WTC11 (cell line): ENCODE measurements at regions of chr20 and their contacts with region 1.

Region 1: DNA sequence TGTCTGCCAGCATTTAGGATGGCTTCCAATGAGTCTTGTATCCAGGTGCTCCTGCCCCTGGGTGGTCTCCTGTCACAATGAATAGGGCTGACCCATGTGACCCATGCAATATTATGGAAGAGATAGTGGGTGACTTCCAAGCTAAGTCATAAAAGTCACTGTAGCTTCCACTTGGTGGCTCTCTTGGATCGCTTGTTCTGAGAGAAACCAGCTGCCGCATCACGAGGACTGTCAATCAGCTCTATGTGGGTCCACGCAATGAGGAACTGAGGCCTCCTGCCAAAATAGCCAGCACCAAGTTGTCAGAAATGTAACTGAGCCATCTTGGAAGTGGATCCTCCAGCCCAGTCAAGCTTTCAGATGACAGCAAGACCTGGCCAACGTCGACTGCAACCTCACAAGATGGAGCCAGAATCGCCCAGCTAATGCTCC is 14.9 kb upstream of the MATN4 start:
- DNase-seq: no peak
- ATAC-seq: peak; percentile 49
- H3K4me3 Mint-ChIP-seq: no peak overlapping the region
- H3K27ac Mint-ChIP-seq: no peak overlapping the region
- H3K4me1 Mint-ChIP-seq: peaks cover 2% of the 10 kb centered on the region; the same call in 1 of the 2 replicates
- H3K27me3 Mint-ChIP-seq: no peaks in the 10 kb centered on the region
- CTCF ChIP-seq: no peak

Region 2: DNA sequence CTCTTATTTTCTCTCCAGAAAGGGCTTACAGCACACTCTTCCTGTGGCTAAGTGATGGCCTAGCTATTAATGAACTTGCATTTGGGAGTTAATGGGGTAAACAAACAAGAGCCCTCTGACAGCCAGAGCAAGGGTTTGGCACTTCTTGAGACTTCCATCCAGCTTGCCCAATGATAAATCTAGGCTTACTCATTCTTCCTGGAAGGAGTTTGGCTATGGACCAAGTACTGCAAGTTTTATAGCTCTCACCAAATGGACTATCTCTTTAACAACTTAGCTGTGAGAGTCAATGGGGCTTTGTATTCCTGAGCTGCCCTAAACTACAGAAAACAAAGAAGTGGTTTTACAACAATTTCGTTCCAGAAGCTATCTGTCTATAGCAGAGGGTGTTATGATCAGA is 165.0 kb before region 1 on chr20:
- CTCF ChIA-PET with region 1: no interaction called
- POLR2A ChIA-PET with region 1: no interaction called
- DNase-seq: no peak
- ATAC-seq: no peak
- H3K4me3 Mint-ChIP-seq: no peak overlapping the region
- H3K27ac Mint-ChIP-seq: no peak overlapping the region
- H3K4me1 Mint-ChIP-seq: no peaks in the 10 kb centered on the region
- H3K27me3 Mint-ChIP-seq: peaks cover 31% of the 10 kb centered on the region
- CTCF ChIP-seq: no peak

Region 3: GRCh38 chr20:45311589-45312211 is 11.3 kb before region 1 on chr20:
- CTCF ChIA-PET with region 1: interaction called, 14 read pairs
- POLR2A ChIA-PET with region 1: no interaction called
- DNase-seq: peak; percentile 92
- ATAC-seq: peak; percentile 68
- H3K4me3 Mint-ChIP-seq: peak overlapping the region; percentile 63
- H3K27ac Mint-ChIP-seq: no peak overlapping the region
- H3K4me1 Mint-ChIP-seq: peaks cover 15% of the 10 kb centered on the region
- H3K27me3 Mint-ChIP-seq: peaks cover 33% of the 10 kb centered on the region
- CTCF ChIP-seq: peak; percentile 71

Region 4: GRCh38 chr20:45341939-45342859 is 19.2 kb after region 1 on chr20:
- CTCF ChIA-PET with region 1: interaction called, 16 read pairs
- POLR2A ChIA-PET with region 1: interaction called, 6 read pairs
- DNase-seq: peak; percentile 82
- ATAC-seq: peak; percentile 72
- H3K4me3 Mint-ChIP-seq: peak overlapping the region; percentile 65
- H3K27ac Mint-ChIP-seq: peak overlapping the region; percentile 98
- H3K4me1 Mint-ChIP-seq: peaks cover 99% of the 10 kb centered on the region
- H3K27me3 Mint-ChIP-seq: no peaks in the 10 kb centered on the region
- CTCF ChIP-seq: no peak

Region 5: GRCh38 chr20:45347936-45348778 is 25.2 kb after region 1 on chr20 and contains the start of gene SDC4:
- CTCF ChIA-PET with region 1: interaction called, 16 read pairs
- POLR2A ChIA-PET with region 1: interaction called, 3 read pairs
- DNase-seq: peak; percentile 68
- ATAC-seq: peak; percentile 63
- H3K4me3 Mint-ChIP-seq: peak within 1 kb of the TSS; percentile 89
- H3K27ac Mint-ChIP-seq: peak within 1 kb of the TSS; percentile 19
- H3K4me1 Mint-ChIP-seq: peaks cover 45% of the 10 kb centered on the region
- H3K27me3 Mint-ChIP-seq: no peaks in the 10 kb centered on the region
- CTCF ChIP-seq: no peak
- total RNA-seq, gene SDC4: 64.0 to 69.6 TPM (median 69.5 TPM) in 3 replicates

Region 6: DNA sequence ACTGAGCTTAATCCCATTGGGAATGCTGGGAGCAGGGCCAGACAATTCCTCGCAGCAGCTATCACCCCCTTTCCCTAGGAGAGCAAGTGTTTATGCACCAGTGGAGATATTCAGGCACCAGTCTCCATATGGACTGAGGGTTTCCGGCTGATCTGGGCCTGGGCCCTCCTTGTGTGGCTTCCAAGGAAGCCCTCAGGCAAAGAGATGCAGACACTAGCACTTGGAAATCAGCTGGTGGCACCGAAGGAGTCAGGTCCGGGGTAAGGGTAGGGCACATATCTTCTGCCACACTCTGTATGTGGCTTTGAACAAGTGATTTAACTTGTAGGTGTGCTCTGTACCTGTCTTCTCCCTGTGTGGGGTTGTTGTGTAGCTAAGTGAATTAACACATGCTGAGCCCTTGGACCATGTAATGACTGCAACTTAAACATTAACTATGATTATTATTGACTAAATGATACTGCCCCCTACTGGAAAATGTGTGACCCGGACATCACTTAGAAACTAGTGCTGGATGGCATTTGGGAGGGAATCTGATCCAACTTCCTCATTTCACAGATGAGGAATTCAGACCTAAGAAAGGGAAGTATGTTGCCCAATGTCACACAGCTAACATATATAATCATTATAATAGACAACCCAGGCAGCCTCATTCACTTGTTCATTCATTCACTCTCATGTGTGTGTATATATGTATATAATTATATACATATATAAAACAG is 127.3 kb after region 1 on chr20:
- CTCF ChIA-PET with region 1: interaction called, 16 read pairs
- POLR2A ChIA-PET with region 1: no interaction called
- DNase-seq: no peak
- ATAC-seq: peak; percentile 59
- H3K4me3 Mint-ChIP-seq: no peak overlapping the region
- H3K27ac Mint-ChIP-seq: no peak overlapping the region
- H3K4me1 Mint-ChIP-seq: peaks cover 3% of the 10 kb centered on the region; the same call in 1 of the 2 replicates
- H3K27me3 Mint-ChIP-seq: peaks cover 3% of the 10 kb centered on the region; the same call in 1 of the 2 replicates
- CTCF ChIP-seq: peak; percentile 70

Region 7: DNA sequence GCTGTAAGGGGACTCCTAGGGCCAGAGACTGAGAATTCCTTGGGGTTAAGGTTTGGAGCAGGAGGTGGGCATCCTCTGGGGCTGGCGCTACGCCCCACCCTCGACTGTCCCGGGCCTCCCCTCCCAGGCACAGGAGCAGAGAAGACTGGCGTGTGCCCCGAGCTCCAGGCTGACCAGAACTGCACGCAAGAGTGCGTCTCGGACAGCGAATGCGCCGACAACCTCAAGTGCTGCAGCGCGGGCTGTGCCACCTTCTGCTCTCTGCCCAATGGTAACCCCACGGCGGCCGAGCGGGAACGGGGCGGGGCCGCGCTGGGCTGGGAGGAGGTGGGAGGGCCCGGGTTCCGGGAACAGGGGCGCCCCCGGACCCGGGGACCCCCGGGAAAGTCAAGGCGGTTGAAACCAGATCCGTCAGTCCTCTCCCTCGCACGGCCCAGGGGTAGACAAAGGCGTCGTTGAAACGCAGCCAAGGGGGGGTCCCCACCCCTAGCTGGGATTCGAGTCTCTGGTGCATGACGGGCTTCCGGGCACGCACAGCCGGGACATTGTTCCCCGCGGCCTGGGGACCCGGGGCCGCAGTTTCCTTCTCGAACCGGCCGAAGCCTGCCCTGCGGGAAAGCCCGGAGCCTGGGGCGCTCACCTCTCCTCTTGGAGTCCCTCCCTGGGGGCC is 147.4 kb after region 1 on chr20:
- CTCF ChIA-PET with region 1: interaction called, 10 read pairs
- POLR2A ChIA-PET with region 1: no interaction called
- DNase-seq: peak; percentile 69
- ATAC-seq: peak; percentile 63
- H3K4me3 Mint-ChIP-seq: peak overlapping the region; percentile 77
- H3K27ac Mint-ChIP-seq: peak overlapping the region; percentile 92
- H3K4me1 Mint-ChIP-seq: peaks cover 45% of the 10 kb centered on the region
- H3K27me3 Mint-ChIP-seq: peaks cover 7% of the 10 kb centered on the region
- CTCF ChIP-seq: no peak

Region 8: DNA sequence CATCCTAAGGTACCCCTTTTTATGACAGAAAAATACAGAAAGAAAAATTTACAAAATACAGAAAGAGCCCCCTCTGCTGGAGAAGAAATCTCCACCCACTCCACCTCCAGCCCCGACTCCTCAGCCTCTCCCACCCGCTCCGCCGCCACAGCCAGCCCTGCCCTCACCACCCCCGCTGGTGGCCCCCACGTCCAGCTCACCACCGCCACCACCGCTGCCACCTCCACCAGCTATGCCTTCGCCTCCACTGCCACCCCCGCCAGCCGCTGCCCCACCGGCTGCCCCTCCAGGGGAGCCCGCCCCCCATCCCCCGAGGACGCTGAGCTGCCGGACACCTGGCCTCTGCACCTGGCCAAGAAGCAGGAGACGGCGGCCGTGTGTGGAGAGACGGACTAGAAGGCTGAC is 164.3 kb after region 1 on chr20:
- CTCF ChIA-PET with region 1: interaction called, 11 read pairs
- POLR2A ChIA-PET with region 1: no interaction called
- DNase-seq: peak; percentile 58
- ATAC-seq: peak; percentile 82
- H3K4me3 Mint-ChIP-seq: peak overlapping the region; percentile 63
- H3K27ac Mint-ChIP-seq: no peak overlapping the region
- H3K4me1 Mint-ChIP-seq: peaks cover 34% of the 10 kb centered on the region
- H3K27me3 Mint-ChIP-seq: no peaks in the 10 kb centered on the region
- CTCF ChIP-seq: peak; percentile 55